ENCODE measurements at regions of chr2 and their contacts with region 1.

Region 1: DNA sequence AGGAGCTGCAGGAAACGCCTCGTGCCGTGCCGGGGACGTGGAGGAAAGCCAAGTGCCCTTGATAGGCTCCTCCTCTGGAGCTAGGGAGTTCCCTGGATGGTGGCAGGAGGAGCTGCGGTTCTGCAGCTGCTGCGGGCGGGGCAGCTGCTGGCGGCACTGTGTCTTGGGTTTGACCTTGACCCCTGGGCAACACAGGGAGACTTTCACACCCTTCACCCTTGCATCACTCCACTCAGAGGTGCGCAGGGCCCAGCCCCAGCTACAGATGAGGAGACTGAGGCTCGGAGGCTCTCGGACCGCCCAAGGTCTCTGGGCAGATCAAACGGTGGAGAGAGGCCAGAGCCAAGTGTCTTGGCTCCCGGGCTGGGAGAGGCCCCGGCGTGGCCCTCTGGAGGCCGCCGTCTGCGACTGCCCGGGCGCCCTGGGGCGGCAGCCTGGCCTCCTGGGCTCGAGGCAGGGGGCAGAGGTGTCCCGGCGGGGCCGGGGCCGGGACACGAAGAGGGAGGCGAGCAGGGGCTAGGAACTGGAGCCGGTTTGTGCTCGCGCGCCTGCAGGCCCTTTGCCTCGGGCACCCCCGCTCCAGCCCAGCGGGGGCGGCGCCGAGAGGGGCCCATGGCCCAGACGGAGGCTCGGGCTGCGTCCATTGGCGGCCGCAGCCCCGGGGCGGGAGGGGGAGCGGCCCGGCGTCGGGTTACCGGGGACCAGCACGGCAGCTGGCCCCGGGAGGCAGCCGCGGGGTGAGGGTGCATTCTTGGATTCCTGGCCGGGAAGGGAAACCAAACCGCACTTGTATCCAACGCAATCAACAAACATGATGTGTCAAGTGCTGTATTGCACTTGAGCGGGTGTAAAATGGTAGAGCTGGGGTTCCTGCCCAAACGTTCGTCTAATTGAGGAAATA is 129.6 kb upstream of the SLC1A4 start:
- DNase-seq: peak; percentile 91
- H3K4me3 ChIP-seq: peak overlapping the region; percentile 6 to 64 (median 33)
- H3K27ac ChIP-seq: peak overlapping the region; percentile 89 to 99 (median 96)
- H3K4me1 ChIP-seq: peaks cover 35 to 92% (median 81%) of the 10 kb centered on the region in 6 donors
- H3K27me3 ChIP-seq: peaks cover 0 to 10% (median 0%) of the 10 kb centered on the region in 7 donors
- CTCF ChIP-seq: peak in 3 of 11 experiments; percentile 17 to 39 (median 18)
- POLR2A ChIP-seq: no peak

Region 2: DNA sequence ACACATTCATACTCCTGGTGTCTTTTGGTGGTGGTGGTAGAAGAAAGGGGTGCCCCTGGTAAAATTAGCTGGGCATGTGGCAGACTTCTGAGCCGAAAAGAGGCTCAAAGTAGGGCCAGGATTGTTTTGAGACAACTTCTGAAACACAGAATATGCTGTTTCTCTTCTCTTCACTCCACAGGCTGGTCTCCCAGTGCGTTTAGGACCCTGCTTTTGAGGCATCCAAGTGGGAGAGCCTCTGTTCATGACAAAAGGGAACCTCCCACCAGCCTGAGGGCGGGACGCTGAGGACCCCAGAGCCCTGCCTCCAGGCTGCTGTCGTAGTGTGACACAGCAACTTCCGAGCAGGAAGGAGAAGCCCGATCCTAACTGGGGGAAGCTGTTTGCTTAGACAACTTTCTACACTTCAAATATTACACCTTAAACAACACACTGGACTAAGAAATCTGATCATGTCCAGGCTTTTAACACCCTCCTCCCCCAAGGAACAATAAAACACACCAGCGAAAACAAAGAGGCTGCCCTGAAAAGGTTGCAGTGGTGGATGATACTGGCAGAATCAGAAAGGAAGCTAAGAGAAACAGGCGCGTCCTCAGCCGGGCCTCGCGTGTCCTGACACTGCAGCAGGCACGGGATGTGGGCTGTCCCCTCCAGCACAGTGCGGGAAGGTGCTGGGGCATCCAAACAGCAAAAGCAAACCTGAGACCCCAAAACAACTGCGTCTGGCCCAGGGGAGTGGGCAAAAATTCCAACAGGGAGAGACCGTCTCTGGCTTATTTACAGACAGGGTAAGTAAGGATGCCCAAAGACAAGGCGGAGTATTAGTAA is 215.2 kb before region 1 on chr2:
- intact Hi-C with region 1: loop called (anchors 5 kb)
- DNase-seq: peak; percentile 93
- H3K4me3 ChIP-seq: peak overlapping the region; percentile 15 to 68 (median 35)
- H3K27ac ChIP-seq: peak overlapping the region; percentile 76 to 100 (median 92)
- H3K4me1 ChIP-seq: peaks cover 61 to 100% (median 98%) of the 10 kb centered on the region in 6 donors
- H3K27me3 ChIP-seq: no peaks in the 10 kb centered on the region
- CTCF ChIP-seq: peak in 1 of 11 experiments; percentile 9
- POLR2A ChIP-seq: peak; percentile 16 to 90 (median 63)

Region 3: GRCh38 chr2:64763126-64763525 is 96.4 kb before region 1 on chr2:
- intact Hi-C with region 1: loop called (anchors 5 kb)
- DNase-seq: no peak
- H3K4me3 ChIP-seq: no peak overlapping the region
- H3K27ac ChIP-seq: no peak overlapping the region
- H3K4me1 ChIP-seq: peaks cover 0 to 24% (median 9%) of the 10 kb centered on the region in 6 donors
- H3K27me3 ChIP-seq: no peaks in the 10 kb centered on the region
- CTCF ChIP-seq: no peak
- POLR2A ChIP-seq: no peak